ENCODE measurements at regions of chr9 and their contacts with region 1.

Region 1: GRCh38 chr9:100714372-100715099 is 136.7 kb downstream of the CAVIN4 start:
- DNase-seq: peak; percentile 42
- H3K4me3 ChIP-seq: no peak overlapping the region
- H3K27ac ChIP-seq: no peak overlapping the region
- H3K4me1 ChIP-seq: no peaks in the 10 kb centered on the region
- H3K27me3 ChIP-seq: no peaks in the 10 kb centered on the region
- CTCF ChIP-seq: peak; percentile 50 to 78 (median 65)
- POLR2A ChIP-seq: no peak

Region 2: DNA sequence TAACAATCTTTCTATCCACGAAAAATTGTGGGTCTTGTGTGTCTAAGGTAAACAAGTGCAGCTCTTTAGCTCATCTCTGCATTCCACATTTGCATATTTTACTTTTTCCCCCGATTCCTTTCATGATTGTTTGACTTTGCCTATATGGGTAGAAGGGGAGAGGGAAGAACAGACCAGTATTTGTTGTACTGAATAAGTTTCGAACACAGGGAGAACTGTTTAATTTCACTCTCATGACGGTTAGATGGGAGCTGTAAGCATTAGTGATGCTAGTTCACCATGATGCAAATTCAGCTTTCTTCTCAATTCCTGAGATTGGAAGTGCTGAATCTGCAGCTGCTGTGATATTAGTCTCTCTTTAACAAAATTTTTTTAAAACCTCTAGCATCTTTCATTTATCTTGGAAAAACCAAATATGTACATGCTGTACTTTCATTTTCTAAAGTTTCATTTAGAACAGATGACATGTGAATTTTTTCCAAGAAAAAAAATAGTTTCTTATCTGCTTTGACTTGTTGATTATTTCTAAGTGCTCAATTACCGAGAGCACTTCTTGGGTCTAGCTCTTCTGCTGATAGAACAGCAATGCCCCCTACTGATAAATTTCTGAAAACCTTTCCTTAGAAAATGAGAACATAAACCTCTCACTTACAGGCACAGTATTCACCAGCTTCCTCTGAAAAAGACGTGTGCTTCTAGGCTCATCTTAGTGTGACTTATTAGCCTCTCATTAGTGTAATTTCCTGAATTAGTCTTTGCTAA is 520.8 kb after region 1 on chr9:
- intact Hi-C with region 1: loop called (anchors 10 kb)
- DNase-seq: no peak
- H3K4me3 ChIP-seq: no peak overlapping the region
- H3K27ac ChIP-seq: no peak overlapping the region
- H3K4me1 ChIP-seq: no peaks in the 10 kb centered on the region
- H3K27me3 ChIP-seq: no peaks in the 10 kb centered on the region
- CTCF ChIP-seq: peak in 3 of 4 experiments; percentile 25 to 61 (median 32)
- POLR2A ChIP-seq: no peak

Region 3: GRCh38 chr9:101311758-101312420 is 597.4 kb after region 1 on chr9:
- intact Hi-C with region 1: loop called (anchors 5 kb)
- DNase-seq: peak; percentile 48
- H3K4me3 ChIP-seq: no peak overlapping the region
- H3K27ac ChIP-seq: no peak overlapping the region
- H3K4me1 ChIP-seq: peaks cover 8% of the 10 kb centered on the region
- H3K27me3 ChIP-seq: no peaks in the 10 kb centered on the region
- CTCF ChIP-seq: peak; percentile 49 to 79 (median 73)
- POLR2A ChIP-seq: no peak